ENCODE measurements at regions of chr9 and their contacts with region 1.

Region 1: DNA sequence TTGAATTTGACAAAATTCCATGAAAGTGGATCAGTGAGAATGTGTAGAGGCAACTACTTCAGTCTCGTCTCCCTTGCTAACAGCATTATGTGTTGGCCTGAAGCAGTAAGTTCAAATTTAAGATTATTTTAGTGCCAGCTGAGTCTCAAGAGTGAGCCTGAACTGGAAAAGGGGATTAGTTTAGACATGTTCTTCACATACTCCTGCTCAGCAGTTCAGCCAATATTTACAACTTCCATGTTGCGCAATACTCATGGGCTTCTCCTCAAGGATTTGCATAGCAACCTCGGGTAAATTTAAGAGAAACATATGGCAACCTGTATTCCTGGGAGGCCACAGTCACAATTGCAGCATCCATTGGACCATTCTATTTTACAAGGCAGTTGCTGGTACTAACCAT is 553.8 kb downstream of the PTPRD start:
- DNase-seq: no peak
- ATAC-seq: no peak
- H3K4me3 ChIP-seq: no peak overlapping the region
- H3K27ac ChIP-seq: no peak overlapping the region
- H3K4me1 ChIP-seq: peaks cover 0 to 7% (median 0%) of the 10 kb centered on the region in 12 donors
- H3K27me3 ChIP-seq: no peaks in the 10 kb centered on the region
- CTCF ChIP-seq: no peak
- POLR2A ChIP-seq: no peak

Region 2: GRCh38 chr9:9998491-9999287 is 60.4 kb before region 1 on chr9:
- intact Hi-C with region 1: loop called in 1 of 10 experiments (anchors 10 kb)
- DNase-seq: no peak
- ATAC-seq: peak in 1 of 4 donors; percentile 34
- H3K4me3 ChIP-seq: no peak overlapping the region
- H3K27ac ChIP-seq: no peak overlapping the region
- H3K4me1 ChIP-seq: peaks cover 0 to 5% (median 0%) of the 10 kb centered on the region in 12 donors
- H3K27me3 ChIP-seq: no peaks in the 10 kb centered on the region
- CTCF ChIP-seq: peak in 7 of 12 donors; percentile 9 to 40 (median 28)
- POLR2A ChIP-seq: no peak

Region 3: DNA sequence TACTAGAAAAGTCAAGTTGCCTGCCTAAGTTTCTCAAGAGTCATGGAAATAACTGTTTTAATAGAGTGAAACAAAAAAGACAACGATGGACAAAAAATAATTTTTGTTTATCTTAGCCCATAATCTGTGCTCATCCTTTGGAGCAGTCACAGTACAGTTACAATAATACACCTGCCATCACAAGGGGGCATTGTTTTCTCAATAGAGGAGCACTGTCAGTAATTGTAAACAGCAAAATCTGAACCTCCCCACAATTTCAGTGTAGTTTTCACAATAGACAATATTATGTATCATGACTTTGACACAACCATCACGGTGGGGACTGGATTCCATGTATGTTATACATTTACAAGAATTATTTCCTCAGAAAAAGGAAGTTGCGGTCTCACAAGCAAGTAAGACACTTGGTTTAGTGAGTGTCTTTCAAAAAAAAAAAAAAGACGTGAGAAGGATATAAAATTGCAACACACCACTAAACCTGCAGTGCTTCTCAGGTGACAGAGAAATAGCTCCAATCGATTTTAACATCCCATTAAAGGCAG is 32.5 kb before region 1 on chr9:
- intact Hi-C with region 1: no loop called
- DNase-seq: no peak
- ATAC-seq: no peak
- H3K4me3 ChIP-seq: no peak overlapping the region
- H3K27ac ChIP-seq: no peak overlapping the region
- H3K4me1 ChIP-seq: no peaks in the 10 kb centered on the region
- H3K27me3 ChIP-seq: no peaks in the 10 kb centered on the region
- CTCF ChIP-seq: no peak
- POLR2A ChIP-seq: no peak

Region 4: GRCh38 chr9:10104774-10105173 is 45.7 kb after region 1 on chr9:
- intact Hi-C with region 1: loop called in 1 of 10 experiments (anchors 5 kb)
- DNase-seq: no peak
- ATAC-seq: no peak
- H3K4me3 ChIP-seq: no peak overlapping the region
- H3K27ac ChIP-seq: no peak overlapping the region
- H3K4me1 ChIP-seq: peaks cover 0 to 7% (median 0%) of the 10 kb centered on the region in 12 donors
- H3K27me3 ChIP-seq: no peaks in the 10 kb centered on the region
- CTCF ChIP-seq: no peak
- POLR2A ChIP-seq: no peak

Region 5: GRCh38 chr9:10268531-10269485 is 209.8 kb after region 1 on chr9:
- intact Hi-C with region 1: loop called (anchors 2 to 5 kb)
- DNase-seq: peak in 3 of 5 donors; percentile 14 to 37 (median 24)
- ATAC-seq: peak in 3 of 4 donors; percentile 71 to 81 (median 79)
- H3K4me3 ChIP-seq: no peak overlapping the region
- H3K27ac ChIP-seq: peak overlapping the region in 2 of 12 donors; percentile 27 to 28
- H3K4me1 ChIP-seq: peaks cover 0 to 7% (median 0%) of the 10 kb centered on the region in 12 donors
- H3K27me3 ChIP-seq: no peaks in the 10 kb centered on the region
- CTCF ChIP-seq: peak in 11 of 12 donors; percentile 26 to 60 (median 46)
- POLR2A ChIP-seq: no peak

Region 6: GRCh38 chr9:10274988-10275387 is 215.9 kb after region 1 on chr9:
- intact Hi-C with region 1: loop called in 1 of 10 experiments (anchors 5 kb)
- DNase-seq: no peak
- ATAC-seq: no peak
- H3K4me3 ChIP-seq: no peak overlapping the region
- H3K27ac ChIP-seq: no peak overlapping the region
- H3K4me1 ChIP-seq: peaks cover 0 to 7% (median 0%) of the 10 kb centered on the region in 12 donors
- H3K27me3 ChIP-seq: no peaks in the 10 kb centered on the region
- CTCF ChIP-seq: peak in 2 of 12 donors; percentile 19 to 21
- POLR2A ChIP-seq: no peak